HCT116 (cell line): ENCODE measurements at regions of chr5 and their contacts with region 1.

Region 1: DNA sequence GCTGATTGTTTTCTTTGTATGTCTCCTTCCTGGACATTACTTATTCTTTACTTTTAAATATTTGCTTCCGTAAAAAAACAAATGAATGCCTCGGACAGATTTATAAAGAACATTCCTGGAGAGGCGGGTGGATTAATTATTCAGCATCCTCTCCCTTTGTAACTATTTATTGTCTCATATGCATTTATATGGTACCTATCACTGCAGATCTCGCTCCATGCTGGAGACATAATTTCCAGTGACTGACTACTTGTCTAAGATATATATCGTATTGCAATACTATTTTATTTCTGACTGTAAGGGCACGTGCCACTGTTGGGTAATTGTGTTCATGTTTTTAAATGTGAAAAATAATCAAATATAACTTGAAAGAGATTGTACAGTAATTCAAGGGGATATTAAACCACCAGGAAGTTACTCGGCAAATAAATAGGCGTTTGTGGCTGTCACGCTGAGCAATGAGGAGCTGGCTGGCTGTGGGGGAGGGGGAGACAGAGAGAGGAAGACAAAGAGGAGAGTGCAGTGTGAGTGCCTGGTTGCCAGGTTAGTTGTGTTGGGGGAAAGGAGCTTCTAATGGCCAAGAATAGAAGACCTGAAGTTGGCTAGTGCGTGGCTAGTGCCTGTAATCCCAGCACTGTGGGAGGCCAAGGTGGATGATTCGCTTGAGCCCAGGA is 131.8 kb upstream of the GABRP start:
- DNase-seq: no peak
- ATAC-seq: no peak
- H3K4me3 ChIP-seq: no peak overlapping the region
- H3K27ac ChIP-seq: no peak overlapping the region
- H3K4me1 ChIP-seq: no peaks in the 10 kb centered on the region
- H3K27me3 ChIP-seq: peaks cover 29% of the 10 kb centered on the region
- CTCF ChIP-seq: no peak
- POLR2A ChIP-seq: no peak
- RAD21 ChIP-seq: no peak

Region 2: DNA sequence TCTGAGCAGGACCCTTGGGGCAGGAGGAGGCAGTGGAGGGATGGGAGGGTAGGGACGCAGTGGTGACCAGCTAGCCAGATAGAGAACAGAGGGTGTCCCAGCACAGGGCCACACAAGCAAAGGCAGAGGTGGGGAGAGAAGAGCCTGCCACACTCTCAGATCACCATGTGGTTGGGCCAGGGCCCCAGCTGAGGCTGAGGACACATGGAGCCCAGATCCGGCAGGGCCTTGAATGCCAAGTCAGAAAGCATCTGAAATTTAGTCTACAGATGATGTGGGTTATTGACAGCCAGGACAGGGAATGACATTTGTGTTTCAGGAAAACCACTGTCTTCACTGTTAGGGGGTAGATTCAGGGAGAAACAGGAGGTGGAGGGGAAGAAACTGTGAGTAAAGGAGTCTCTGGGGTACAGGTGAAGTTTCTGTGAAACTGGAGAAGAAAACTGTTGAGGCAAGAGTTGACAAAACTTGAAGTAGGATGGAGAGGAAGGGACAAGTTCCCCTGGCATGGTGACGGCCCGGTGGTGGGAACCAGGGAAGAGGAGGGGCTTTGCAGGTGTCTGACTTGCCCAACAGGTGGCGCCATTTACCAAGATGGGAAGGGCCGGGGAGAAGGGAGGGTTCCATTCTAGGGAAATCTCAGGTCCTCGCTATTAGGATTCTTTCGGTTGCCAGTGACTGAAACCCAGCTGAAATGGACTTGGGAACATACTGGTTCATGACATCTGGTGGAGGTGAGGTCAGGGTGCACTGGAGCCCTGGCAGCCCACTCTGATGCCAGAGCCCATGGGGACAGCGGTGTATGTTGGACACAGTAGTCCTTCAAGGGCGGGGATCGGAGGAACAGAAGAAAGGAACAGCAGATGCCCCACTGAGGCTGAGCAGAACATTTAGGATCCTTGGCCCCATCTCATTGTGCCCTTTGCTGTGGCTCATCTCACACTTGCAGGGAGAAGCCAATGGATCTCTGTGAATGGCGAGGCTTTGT is 47.9 kb before region 1 on chr5:
- CTCF ChIA-PET with region 1: no interaction called
- POLR2A ChIA-PET with region 1: no interaction called
- RAD21 ChIA-PET with region 1: interaction called in 1 of 2 experiments, 13 read pairs
- intact Hi-C with region 1: no loop called
- DNase-seq: peak; percentile 22
- ATAC-seq: peak; percentile 99
- H3K4me3 ChIP-seq: no peak overlapping the region
- H3K27ac ChIP-seq: no peak overlapping the region
- H3K4me1 ChIP-seq: no peaks in the 10 kb centered on the region
- H3K27me3 ChIP-seq: peaks cover 11% of the 10 kb centered on the region
- CTCF ChIP-seq: peak; percentile 84 to 89 (median 86)
- POLR2A ChIP-seq: no peak
- RAD21 ChIP-seq: peak; percentile 88